CD8-positive, alpha-beta T cell (primary cell): ENCODE measurements at regions of chr9 and their contacts with region 1.

Region 1: GRCh38 chr9:128947422-128948301 is at the starts of genes DOLK and NUP188:
- DNase-seq: peak; percentile 97 to 100 (median 99)
- ATAC-seq: peak; percentile 87
- H3K4me3 ChIP-seq: peak within 1 kb of the TSS; percentile 93 to 99
- H3K4me3 Mint-ChIP-seq: peak within 1 kb of the TSS; percentile 99
- H3K27ac ChIP-seq: peak within 1 kb of the TSS; percentile 85 to 99
- H3K27ac Mint-ChIP-seq: peak within 1 kb of the TSS; percentile 97
- H3K4me1 ChIP-seq: peaks cover 20% of the 10 kb centered on the region
- H3K4me1 Mint-ChIP-seq: peaks cover 31% of the 10 kb centered on the region
- H3K27me3 ChIP-seq: no peaks in the 10 kb centered on the region
- H3K27me3 Mint-ChIP-seq: no peaks in the 10 kb centered on the region
- CTCF ChIP-seq: no peak
- total RNA-seq, gene DOLK: 10.4 to 10.7 TPM
- total RNA-seq, gene NUP188: 48.7 to 49.0 TPM

Region 2: DNA sequence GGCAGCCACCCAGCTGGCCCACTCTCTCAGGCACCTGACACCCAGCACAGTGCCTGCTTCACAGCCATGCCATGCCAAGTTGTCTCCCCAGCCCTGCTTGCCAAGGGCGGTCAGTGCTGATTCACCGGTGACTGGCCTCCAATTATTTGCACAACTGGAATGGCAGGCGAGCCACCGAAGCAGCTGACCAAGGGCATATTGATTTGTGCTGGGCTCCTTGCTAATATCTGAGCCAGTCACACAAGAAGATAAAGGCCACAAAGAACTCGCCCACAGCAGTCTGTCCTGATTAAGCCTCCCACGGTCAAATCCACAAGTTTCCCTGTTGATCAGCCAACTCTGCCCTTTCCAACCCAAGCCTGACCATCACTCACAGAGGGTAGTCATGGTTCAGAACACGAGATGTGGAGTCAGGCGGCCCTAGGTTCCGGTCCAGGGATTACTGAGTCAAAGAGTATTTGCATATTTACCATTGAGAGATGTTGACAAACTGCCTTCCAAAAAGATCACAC is 960.5 kb before region 1 on chr9:
- CTCF ChIA-PET with region 1: no interaction called
- POLR2A ChIA-PET with region 1: no interaction called
- intact Hi-C with region 1: no loop called
- DNase-seq: no peak
- ATAC-seq: no peak
- H3K4me3 ChIP-seq: no peak overlapping the region
- H3K4me3 Mint-ChIP-seq: no peak overlapping the region
- H3K27ac ChIP-seq: no peak overlapping the region
- H3K27ac Mint-ChIP-seq: peak overlapping the region; percentile 67
- H3K4me1 ChIP-seq: peaks cover 45% of the 10 kb centered on the region
- H3K4me1 Mint-ChIP-seq: peaks cover 46% of the 10 kb centered on the region
- H3K27me3 ChIP-seq: no peaks in the 10 kb centered on the region
- H3K27me3 Mint-ChIP-seq: no peaks in the 10 kb centered on the region
- CTCF ChIP-seq: no peak

Region 3: DNA sequence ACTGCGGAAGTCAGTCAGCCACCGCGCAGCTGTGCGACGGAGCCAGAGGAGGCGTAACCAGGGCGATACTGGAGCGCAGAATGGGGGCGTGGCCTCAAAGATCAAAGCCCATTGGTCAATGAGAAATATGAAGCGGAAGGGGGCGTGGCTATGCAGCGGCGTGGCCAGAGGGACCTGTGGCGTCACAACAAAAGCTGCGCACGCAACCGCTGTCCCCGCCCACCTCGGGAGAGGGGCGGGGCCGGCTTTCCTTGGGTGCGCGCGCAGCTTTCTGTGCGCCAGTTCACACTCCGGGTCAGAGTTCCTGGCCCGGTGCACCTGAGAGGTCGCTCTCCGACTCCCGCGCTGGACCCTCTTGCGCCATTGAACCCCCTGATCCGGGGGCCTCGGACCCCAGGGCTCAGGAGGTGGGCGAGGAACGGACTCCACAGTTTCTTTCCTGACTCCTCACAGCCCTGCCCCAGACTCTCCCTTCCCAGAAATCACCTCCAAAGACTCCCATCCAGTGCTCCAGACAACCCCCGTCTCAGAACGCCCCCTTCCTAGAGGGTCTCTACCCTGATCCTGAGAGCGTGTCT is 671.6 kb before region 1 on chr9 and contains the starts of genes GOLGA2 and SWI5:
- CTCF ChIA-PET with region 1: no interaction called
- POLR2A ChIA-PET with region 1: no interaction called
- intact Hi-C with region 1: loop called in 1 of 2 experiments (anchors 5 kb)
- DNase-seq: peak; percentile 99 to 100 (median 100)
- ATAC-seq: peak; percentile 93
- H3K4me3 ChIP-seq: peak within 1 kb of the TSS; percentile 75 to 81
- H3K4me3 Mint-ChIP-seq: peak within 1 kb of the TSS; percentile 96
- H3K27ac ChIP-seq: peak within 1 kb of the TSS; percentile 76 to 81
- H3K27ac Mint-ChIP-seq: peak within 1 kb of the TSS; percentile 96
- H3K4me1 ChIP-seq: peaks cover 22% of the 10 kb centered on the region
- H3K4me1 Mint-ChIP-seq: peaks cover 32% of the 10 kb centered on the region
- H3K27me3 ChIP-seq: no peaks in the 10 kb centered on the region
- H3K27me3 Mint-ChIP-seq: no peaks in the 10 kb centered on the region
- CTCF ChIP-seq: no peak
- total RNA-seq, gene GOLGA2: 49.9 to 59.0 TPM
- total RNA-seq, gene SWI5: 3.5 to 4.3 TPM

Region 4: DNA sequence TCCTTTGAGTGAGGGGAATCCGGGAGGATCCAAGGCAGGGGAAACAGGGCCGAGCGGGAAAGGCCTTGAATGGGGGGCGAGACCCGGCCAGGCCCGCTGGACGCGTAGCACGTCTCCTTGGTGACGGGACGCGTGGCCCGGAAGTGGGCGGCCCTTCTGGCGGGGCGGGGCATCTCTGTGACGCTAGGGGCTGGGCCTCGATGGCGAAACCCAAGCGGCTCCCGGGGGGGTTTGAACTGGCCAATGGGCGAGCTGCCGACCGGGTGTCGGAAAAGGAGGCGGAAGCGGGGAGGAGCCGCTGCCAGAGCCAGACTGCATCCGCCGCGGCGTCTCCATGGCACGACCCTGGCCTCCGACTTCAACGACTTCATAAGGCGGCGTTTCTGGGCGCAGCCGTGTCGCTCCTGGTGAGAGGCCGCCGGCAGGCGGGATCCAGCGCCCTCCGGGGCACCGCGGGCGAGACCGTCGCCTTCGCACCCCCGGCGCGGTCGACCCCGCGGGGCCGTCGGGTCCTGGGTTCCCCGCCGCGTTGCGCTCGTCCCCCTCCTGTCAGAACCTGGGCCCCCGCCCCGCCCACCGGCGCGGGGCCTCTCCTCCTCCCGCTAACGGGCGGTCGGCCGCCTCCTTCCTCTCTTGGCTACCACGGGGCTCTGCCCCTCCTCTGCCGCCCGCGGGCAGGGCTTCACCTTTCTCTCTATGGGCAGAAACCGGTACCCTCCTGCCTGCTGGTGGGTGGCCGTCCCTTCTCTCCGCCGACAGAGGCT is 491.6 kb before region 1 on chr9 and contains the start of gene ODF2:
- CTCF ChIA-PET with region 1: no interaction called
- POLR2A ChIA-PET with region 1: no interaction called
- intact Hi-C with region 1: loop called in 1 of 2 experiments (anchors 5 kb)
- DNase-seq: peak; percentile 96 to 99 (median 99)
- ATAC-seq: peak; percentile 90
- H3K4me3 ChIP-seq: peak within 1 kb of the TSS; percentile 74 to 87
- H3K4me3 Mint-ChIP-seq: peak within 1 kb of the TSS; percentile 89
- H3K27ac ChIP-seq: peak within 1 kb of the TSS; percentile 87
- H3K27ac Mint-ChIP-seq: peak within 1 kb of the TSS; percentile 91
- H3K4me1 ChIP-seq: peaks cover 8% of the 10 kb centered on the region
- H3K4me1 Mint-ChIP-seq: peaks cover 22% of the 10 kb centered on the region
- H3K27me3 ChIP-seq: no peaks in the 10 kb centered on the region
- H3K27me3 Mint-ChIP-seq: no peaks in the 10 kb centered on the region
- CTCF ChIP-seq: no peak
- total RNA-seq, gene ODF2: 15.0 to 17.2 TPM

Region 5: GRCh38 chr9:128628471-128629048 is 319.1 kb before region 1 on chr9:
- CTCF ChIA-PET with region 1: no interaction called
- POLR2A ChIA-PET with region 1: no interaction called
- intact Hi-C with region 1: no loop called
- DNase-seq: no peak
- ATAC-seq: no peak
- H3K4me3 ChIP-seq: no peak overlapping the region
- H3K4me3 Mint-ChIP-seq: no peak overlapping the region
- H3K27ac ChIP-seq: no peak overlapping the region
- H3K27ac Mint-ChIP-seq: no peak overlapping the region
- H3K4me1 ChIP-seq: no peaks in the 10 kb centered on the region
- H3K4me1 Mint-ChIP-seq: no peaks in the 10 kb centered on the region
- H3K27me3 ChIP-seq: no peaks in the 10 kb centered on the region
- H3K27me3 Mint-ChIP-seq: no peaks in the 10 kb centered on the region
- CTCF ChIP-seq: no peak

Region 6: DNA sequence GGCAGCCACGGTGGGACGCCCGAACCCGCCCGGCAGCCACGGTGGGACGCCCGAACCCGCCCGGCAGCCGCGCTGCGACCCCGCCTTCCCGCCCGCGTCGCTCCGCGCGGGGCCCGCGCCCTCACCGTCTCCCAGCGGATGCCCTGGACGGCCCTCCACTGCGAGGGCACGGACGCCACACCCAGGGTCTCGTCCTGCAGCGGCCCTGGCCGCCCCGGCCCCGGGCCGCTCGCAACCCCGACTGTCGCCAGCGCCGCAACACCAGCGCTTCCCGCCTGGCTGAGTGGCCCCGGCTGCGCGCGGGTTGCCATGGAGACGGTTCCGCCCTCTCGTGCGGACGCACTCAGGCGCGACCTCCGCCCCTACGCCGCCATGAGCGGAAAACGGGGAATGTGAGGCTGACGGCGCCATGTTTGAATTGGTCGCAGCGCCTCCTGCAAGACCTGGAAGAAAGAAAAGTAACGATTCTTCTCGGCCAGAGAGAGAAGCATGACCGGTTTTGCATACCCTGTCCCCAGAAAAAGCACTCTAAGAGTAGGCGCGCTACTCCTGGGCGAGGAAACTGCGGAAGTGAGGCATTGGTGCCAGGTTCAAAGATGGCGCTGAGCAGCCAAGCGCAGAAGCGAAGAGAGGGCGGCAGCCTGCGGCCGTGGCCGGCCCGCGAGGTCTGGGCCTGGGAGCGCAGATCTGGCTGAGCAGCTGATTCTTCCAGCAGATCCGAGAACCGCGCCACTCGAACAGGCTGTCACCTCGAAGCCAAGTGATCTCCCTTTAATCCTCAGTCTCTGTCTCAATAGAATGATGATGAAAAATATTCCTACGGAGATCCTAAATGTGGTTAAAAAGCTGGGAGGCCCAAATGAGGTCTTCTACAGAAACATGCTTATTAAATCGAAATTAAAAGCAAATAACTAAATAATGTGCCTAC is 291.0 kb before region 1 on chr9 and contains the start of gene DYNC2I2:
- CTCF ChIA-PET with region 1: no interaction called
- POLR2A ChIA-PET with region 1: no interaction called
- intact Hi-C with region 1: loop called in 1 of 2 experiments (anchors 1 kb)
- DNase-seq: peak; percentile 92 to 98 (median 97)
- ATAC-seq: peak; percentile 96
- H3K4me3 ChIP-seq: peak within 1 kb of the TSS; percentile 72 to 76
- H3K4me3 Mint-ChIP-seq: peak within 1 kb of the TSS; percentile 95
- H3K27ac ChIP-seq: peak within 1 kb of the TSS; percentile 88 to 97
- H3K27ac Mint-ChIP-seq: peak within 1 kb of the TSS; percentile 99
- H3K4me1 ChIP-seq: peaks cover 5% of the 10 kb centered on the region
- H3K4me1 Mint-ChIP-seq: peaks cover 7% of the 10 kb centered on the region
- H3K27me3 ChIP-seq: no peaks in the 10 kb centered on the region
- H3K27me3 Mint-ChIP-seq: no peaks in the 10 kb centered on the region
- CTCF ChIP-seq: no peak
- total RNA-seq, gene DYNC2I2: 3.7 to 3.9 TPM

Region 7: DNA sequence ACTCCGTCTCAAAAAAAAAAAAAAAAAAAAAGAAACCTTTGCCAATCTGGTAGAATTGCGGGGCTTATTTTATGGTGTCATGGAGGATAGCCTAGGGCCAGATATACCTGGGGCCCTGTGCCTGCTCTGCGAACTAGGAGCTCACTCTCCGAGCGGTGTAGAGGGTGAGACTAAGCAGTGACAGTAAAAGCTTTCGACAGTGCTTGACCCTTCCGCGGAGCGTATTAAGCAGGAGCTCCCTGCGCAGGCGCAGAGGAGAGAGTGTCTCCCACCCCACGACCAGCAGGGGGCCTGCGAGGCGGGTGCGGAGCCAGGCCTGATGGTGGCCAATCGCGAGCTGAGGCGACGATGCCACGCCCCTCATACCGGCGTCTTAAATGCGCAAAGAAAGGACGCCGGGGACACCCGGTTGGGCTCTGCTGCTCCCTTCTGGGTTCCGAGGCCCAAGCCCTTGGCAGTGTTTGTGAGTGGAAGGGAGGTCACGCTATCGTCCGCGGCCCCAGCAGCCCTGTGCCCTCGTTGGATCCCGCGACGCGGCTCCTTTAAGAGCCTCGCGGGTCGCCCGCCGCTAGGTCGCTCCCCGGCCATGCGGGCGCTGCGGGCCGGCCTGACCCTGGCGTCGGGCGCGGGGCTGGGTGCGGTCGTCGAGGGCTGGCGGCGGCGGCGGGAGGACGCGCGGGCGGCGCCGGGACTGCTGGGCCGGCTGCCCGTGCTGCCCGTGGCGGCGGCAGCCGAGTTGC is 129.4 kb before region 1 on chr9 and contains the start of gene ENDOG:
- CTCF ChIA-PET with region 1: no interaction called
- POLR2A ChIA-PET with region 1: no interaction called
- intact Hi-C with region 1: loop called in 1 of 2 experiments (anchors 1 kb)
- DNase-seq: peak; percentile 94 to 98 (median 97)
- ATAC-seq: peak; percentile 96
- H3K4me3 ChIP-seq: peak within 1 kb of the TSS; percentile 59 to 75
- H3K4me3 Mint-ChIP-seq: peak within 1 kb of the TSS; percentile 91
- H3K27ac ChIP-seq: peak within 1 kb of the TSS; percentile 52 to 67
- H3K27ac Mint-ChIP-seq: peak within 1 kb of the TSS; percentile 87
- H3K4me1 ChIP-seq: peaks cover 12% of the 10 kb centered on the region
- H3K4me1 Mint-ChIP-seq: peaks cover 21% of the 10 kb centered on the region
- H3K27me3 ChIP-seq: no peaks in the 10 kb centered on the region
- H3K27me3 Mint-ChIP-seq: no peaks in the 10 kb centered on the region
- CTCF ChIP-seq: peak; percentile 98
- total RNA-seq, gene ENDOG: 6.2 to 6.4 TPM

Region 8: DNA sequence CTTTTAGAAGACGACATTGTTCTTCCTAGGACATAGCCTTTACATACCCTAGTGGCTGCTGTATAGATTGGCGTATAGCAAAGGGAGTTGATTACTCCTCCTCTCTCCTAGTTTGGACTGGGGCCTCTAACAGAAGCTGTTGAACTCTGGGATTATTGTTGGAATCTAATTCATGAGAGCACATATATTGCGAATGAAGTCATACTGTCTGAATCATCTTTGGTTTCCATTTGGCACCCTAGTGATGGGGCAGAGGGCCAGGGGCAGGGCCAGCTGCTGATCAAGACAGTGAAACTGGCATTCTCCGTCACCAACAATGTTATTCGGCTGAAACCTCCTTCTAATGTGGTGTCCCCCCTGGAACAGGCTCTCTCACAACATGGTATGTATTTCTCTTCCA is 40.1 kb after region 1 on chr9:
- CTCF ChIA-PET with region 1: no interaction called
- POLR2A ChIA-PET with region 1: no interaction called
- intact Hi-C with region 1: no loop called
- DNase-seq: no peak
- ATAC-seq: no peak
- H3K4me3 ChIP-seq: no peak overlapping the region
- H3K4me3 Mint-ChIP-seq: no peak overlapping the region
- H3K27ac ChIP-seq: no peak overlapping the region
- H3K27ac Mint-ChIP-seq: no peak overlapping the region
- H3K4me1 ChIP-seq: no peaks in the 10 kb centered on the region
- H3K4me1 Mint-ChIP-seq: no peaks in the 10 kb centered on the region
- H3K27me3 ChIP-seq: no peaks in the 10 kb centered on the region
- H3K27me3 Mint-ChIP-seq: no peaks in the 10 kb centered on the region
- CTCF ChIP-seq: no peak

Region 9: DNA sequence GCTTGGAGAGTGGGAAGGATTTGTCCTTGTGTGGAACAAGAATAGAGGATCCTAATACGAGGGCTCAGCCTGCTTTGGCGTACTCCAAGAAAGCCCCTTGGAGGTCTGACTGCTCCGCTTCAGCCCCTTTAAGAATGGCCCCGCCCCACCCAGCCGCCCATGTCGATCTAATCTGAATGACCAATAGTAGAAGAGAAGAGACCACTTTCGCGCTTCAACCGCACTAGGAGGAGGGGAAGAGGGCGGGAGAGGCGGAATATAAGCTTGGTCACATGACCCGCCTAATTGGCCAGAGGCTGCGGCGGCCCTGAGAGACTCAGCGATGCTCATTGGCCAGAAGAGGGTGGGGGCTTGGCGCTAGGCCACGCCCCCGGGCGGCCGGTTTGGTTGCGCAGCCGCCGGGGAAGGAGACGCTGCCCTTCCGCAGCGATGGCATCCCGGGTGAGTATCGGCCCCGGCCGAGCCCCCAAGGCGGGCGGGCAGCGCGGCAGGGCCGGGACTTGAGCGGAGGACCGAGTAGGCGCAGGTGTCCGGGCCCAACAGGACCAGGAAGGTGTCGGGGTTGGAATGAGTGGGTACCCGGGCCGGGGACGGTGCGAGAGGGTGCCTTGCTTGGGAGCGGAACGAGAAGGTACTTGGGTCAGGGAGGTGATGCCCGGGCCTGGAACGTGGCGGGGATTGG is 88.7 kb after region 1 on chr9 and contains the start of gene MIGA2:
- CTCF ChIA-PET with region 1: no interaction called
- POLR2A ChIA-PET with region 1: no interaction called
- intact Hi-C with region 1: loop called in 1 of 2 experiments (anchors 1 kb)
- DNase-seq: peak; percentile 85 to 99 (median 94)
- ATAC-seq: peak; percentile 94
- H3K4me3 ChIP-seq: peak within 1 kb of the TSS; percentile 99
- H3K4me3 Mint-ChIP-seq: peak within 1 kb of the TSS; percentile 98
- H3K27ac ChIP-seq: peak within 1 kb of the TSS; percentile 68 to 83
- H3K27ac Mint-ChIP-seq: peak within 1 kb of the TSS; percentile 85
- H3K4me1 ChIP-seq: peaks cover 21% of the 10 kb centered on the region
- H3K4me1 Mint-ChIP-seq: peaks cover 36% of the 10 kb centered on the region
- H3K27me3 ChIP-seq: no peaks in the 10 kb centered on the region
- H3K27me3 Mint-ChIP-seq: no peaks in the 10 kb centered on the region
- CTCF ChIP-seq: no peak
- total RNA-seq, gene MIGA2: 63.5 to 69.0 TPM

Region 10: DNA sequence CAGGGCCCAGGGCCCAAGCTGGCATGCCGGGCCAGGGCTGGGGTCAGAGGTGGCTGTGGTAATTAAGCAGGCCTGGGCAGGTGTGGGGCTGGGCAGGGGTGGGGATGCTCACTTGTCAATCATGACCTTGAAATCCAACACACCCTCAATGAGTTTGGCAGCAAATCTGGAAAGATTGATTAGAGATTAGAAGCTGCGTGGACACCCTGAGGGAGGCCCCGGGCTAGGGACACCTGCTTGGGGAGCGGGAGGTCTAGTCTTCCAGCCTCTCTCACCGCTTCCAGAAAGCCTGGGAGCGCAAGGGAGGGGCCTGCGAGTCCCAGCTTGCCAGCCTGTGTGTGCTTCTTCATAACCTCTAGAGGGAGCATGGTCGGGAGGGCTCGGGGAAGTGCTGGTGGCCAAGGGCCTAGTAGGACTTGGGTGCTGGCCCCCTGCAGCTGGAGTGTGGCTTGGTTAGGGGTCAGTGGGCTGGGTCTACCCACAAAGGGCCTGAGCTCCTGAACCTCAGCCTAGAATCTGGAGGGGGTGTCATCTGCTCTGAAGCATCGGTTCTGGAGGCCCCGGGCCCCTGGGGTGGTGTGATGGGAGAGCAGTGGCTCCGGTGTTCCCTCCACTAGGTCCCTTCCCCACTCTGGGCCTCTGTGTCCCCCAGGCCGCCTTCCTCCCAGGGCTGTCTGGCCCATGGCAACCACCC is 155.4 kb after region 1 on chr9:
- CTCF ChIA-PET with region 1: no interaction called
- POLR2A ChIA-PET with region 1: no interaction called
- intact Hi-C with region 1: no loop called
- DNase-seq: peak in 1 of 9 experiments; percentile 38
- ATAC-seq: no peak
- H3K4me3 ChIP-seq: no peak overlapping the region
- H3K4me3 Mint-ChIP-seq: no peak overlapping the region
- H3K27ac ChIP-seq: no peak overlapping the region
- H3K27ac Mint-ChIP-seq: no peak overlapping the region
- H3K4me1 ChIP-seq: no peaks in the 10 kb centered on the region
- H3K4me1 Mint-ChIP-seq: no peaks in the 10 kb centered on the region
- H3K27me3 ChIP-seq: no peaks in the 10 kb centered on the region
- H3K27me3 Mint-ChIP-seq: no peaks in the 10 kb centered on the region
- CTCF ChIP-seq: no peak